Mammary epithelial cell (primary cell): ENCODE measurements at regions of chr1 and their contacts with region 1.

Region 1: DNA sequence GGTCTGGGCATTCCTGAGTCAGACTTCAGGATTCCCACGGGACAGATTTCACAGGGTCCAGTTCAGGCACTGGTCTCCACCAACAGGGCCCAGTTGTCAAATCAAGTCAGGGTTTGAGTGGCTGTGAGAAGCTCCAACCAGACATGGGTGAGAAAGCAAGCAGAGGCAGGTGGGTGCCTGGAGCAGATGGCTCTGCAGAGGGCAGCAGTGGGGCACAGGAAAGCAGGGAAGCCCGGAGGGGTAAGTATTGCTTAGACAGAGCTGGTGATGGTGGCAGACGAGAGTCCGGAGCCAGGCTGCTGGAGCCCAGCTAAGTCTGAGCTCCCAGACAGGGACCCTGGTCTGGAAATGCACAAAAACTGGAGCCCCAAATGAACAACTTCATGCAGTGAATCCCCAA is 40.4 kb downstream of the RIMS3 start:
- DNase-seq: peak; percentile 37
- H3K4me3 ChIP-seq: no peak overlapping the region
- H3K27ac ChIP-seq: no peak overlapping the region
- H3K4me1 ChIP-seq: peaks cover 33% of the 10 kb centered on the region
- H3K27me3 ChIP-seq: no peaks in the 10 kb centered on the region
- CTCF ChIP-seq: peak; percentile 43 to 76

Region 2: DNA sequence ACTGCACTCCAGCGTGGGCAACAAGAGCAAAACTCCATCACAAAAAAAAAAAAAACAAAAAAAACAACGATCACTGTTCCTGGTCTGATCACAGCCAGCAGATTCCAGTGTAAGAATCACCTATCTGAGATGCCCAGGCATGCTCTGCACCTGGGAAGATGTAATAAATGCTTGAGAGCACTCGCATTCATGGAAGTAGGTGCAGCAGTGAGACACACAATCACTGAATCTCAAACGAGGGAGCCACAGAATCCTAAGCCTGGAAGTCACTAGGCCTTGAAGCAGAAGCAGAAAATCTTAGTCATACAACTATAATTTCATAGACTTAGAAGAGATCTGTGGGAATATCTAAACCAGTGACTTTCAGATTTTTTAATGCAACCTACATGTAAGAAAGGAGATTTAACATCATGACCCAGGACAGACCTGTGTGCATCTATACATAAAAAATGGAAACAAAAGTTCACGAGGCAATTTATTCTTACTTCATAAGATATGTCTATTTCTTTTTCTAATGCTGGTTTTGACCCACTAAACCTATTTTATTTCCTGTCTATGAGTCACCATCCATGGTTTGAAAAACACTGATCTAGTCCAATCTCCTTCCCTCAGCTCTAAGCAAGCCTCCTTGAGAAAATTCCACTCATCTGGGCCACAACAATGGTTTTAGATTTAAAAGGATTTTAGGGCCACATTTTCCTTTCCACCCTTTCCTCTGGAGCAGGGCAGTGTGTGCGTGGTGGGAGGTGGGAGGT is 10.0 kb after region 1 on chr1:
- CTCF ChIA-PET with region 1: no interaction called
- dilution Hi-C with region 1: no loop called
- in situ Hi-C with region 1: no loop called
- intact Hi-C with region 1: loop called (anchors 1 kb)
- DNase-seq: peak; percentile 85
- H3K4me3 ChIP-seq: no peak overlapping the region
- H3K27ac ChIP-seq: peak overlapping the region; percentile 75
- H3K4me1 ChIP-seq: peaks cover 21% of the 10 kb centered on the region
- H3K27me3 ChIP-seq: no peaks in the 10 kb centered on the region
- CTCF ChIP-seq: no peak

Region 3: DNA sequence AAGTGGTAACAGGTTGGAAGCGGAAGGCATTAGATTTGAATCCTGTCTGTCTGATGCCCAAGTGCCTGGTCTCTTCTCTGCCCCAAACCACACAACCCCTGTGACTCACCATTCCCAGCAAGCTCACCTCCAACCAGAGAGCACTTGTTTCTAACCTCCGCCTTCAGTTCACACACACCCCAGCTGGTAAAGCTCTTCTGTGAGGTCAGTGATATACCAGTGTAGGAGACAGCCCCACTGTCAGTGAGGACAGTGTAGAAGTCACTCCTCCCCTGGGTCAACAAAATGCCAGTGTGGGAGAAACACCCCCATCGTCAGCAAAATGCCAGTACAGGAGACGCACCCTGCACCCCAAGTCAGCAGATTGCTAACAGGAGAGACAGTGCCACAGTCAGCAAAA is 37.8 kb after region 1 on chr1:
- CTCF ChIA-PET with region 1: interaction called, 11 read pairs
- dilution Hi-C with region 1: no loop called
- in situ Hi-C with region 1: no loop called
- intact Hi-C with region 1: loop called (anchors 1 kb)
- DNase-seq: peak; percentile 80
- H3K4me3 ChIP-seq: no peak overlapping the region
- H3K27ac ChIP-seq: no peak overlapping the region
- H3K4me1 ChIP-seq: peaks cover 23% of the 10 kb centered on the region
- H3K27me3 ChIP-seq: peaks cover 2% of the 10 kb centered on the region
- CTCF ChIP-seq: no peak

Region 4: GRCh38 chr1:40691538-40692428 is 66.7 kb after region 1 on chr1 and contains the start of gene NFYC:
- CTCF ChIA-PET with region 1: interaction called, 19 read pairs
- dilution Hi-C with region 1: no loop called
- in situ Hi-C with region 1: no loop called
- intact Hi-C with region 1: no loop called
- DNase-seq: peak; percentile 96
- H3K4me3 ChIP-seq: peak within 1 kb of the TSS; percentile 49 to 77 (median 73)
- H3K27ac ChIP-seq: peak within 1 kb of the TSS; percentile 90
- H3K4me1 ChIP-seq: peaks cover 13% of the 10 kb centered on the region
- H3K27me3 ChIP-seq: no peaks in the 10 kb centered on the region
- CTCF ChIP-seq: no peak
- total RNA-seq, gene NFYC: 32.0 to 48.7 TPM

Region 5: DNA sequence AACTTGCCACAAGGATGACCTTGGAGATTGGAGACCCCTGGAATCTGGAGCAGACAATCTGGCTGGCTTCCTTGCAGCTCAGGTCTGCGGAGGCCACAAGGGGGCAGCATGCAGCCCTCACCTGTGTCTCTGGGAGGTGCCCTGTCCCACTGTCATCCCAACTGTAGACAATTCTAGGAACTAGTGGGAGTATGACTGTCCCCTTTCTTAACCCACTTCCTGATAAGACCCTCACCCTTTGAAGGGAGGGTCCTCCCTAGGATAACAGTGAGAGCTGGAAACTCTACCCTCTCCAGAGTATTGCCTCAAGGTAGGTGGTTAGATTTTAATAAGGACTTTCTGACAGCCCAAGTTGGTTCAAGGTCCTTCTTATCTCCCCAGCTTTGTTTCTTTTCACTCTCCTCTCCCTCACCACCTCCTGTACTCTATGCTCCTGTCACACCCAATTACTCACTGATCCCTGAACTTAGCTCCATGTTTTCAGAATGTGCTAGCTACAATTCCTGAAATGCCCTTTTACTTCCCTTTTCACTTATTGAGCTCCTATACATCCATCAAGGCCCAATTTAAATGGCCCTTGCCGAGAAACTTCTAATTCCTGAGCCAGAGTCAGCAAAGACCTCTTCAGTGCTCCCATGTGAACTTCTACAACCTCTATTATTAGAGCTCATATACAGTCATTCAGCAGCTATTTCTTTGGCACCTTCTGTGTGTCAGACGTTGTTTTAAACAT is 149.4 kb after region 1 on chr1:
- CTCF ChIA-PET with region 1: no interaction called
- dilution Hi-C with region 1: no loop called
- in situ Hi-C with region 1: no loop called
- intact Hi-C with region 1: loop called (anchors 5 kb)
- DNase-seq: no peak
- H3K4me3 ChIP-seq: no peak overlapping the region
- H3K27ac ChIP-seq: no peak overlapping the region
- H3K4me1 ChIP-seq: peaks cover 13% of the 10 kb centered on the region
- H3K27me3 ChIP-seq: no peaks in the 10 kb centered on the region
- CTCF ChIP-seq: peak; percentile 83 to 84